Activated T-helper 1 cell treated with anti-CD3 and anti-CD28 coated beads, Interleukin-12 subunit alpha, Interleukin-12 subunit beta, Interleukin-2, Interleukin-4 antibody, amounts not matched to agents 30 ng/mL and 10 ng/mL and 1 ng/mL, durations not matched to agents 14 hours and 24 hours and 36 hours (primary cell): ENCODE measurements at regions of chr14 and their contacts with region 1.

Region 1: GRCh38 chr14:105861985-105862465 is 335.6 kb downstream of the TMEM121 start:
- DNase-seq: peak; percentile 24
- H3K4me3 Mint-ChIP-seq: peak overlapping the region; percentile 78
- H3K27ac Mint-ChIP-seq: peak overlapping the region; percentile 80
- H3K4me1 Mint-ChIP-seq: peaks cover 40% of the 10 kb centered on the region
- H3K27me3 Mint-ChIP-seq: peaks cover 4% of the 10 kb centered on the region

Region 2: DNA sequence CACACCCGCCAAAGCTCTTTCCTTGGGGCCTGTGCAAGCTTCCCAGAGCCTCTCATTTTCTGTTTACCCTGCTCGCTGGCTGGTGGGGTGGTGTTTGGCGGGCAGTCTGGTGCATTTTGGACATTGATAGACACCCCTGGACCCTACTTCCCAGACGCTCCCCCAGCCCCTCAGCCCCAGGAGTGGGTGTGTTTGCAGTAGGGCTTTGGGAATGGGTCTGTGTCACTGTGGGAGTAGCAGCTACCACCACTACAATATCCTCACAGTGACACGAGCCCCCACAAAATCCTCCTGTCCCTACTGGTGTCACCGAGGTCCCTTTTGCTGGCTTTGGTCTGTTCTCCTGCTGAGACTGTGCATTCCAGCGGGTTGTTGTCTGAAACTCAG is 35.7 kb after region 1 on chr14:
- intact Hi-C with region 1: loop called (anchors 1 kb)
- DNase-seq: no peak
- H3K4me3 Mint-ChIP-seq: no peak overlapping the region
- H3K27ac Mint-ChIP-seq: no peak overlapping the region
- H3K4me1 Mint-ChIP-seq: no peaks in the 10 kb centered on the region
- H3K27me3 Mint-ChIP-seq: peaks cover 24% of the 10 kb centered on the region